ENCODE measurements at regions of chr17 and their contacts with region 1.

Region 1: DNA sequence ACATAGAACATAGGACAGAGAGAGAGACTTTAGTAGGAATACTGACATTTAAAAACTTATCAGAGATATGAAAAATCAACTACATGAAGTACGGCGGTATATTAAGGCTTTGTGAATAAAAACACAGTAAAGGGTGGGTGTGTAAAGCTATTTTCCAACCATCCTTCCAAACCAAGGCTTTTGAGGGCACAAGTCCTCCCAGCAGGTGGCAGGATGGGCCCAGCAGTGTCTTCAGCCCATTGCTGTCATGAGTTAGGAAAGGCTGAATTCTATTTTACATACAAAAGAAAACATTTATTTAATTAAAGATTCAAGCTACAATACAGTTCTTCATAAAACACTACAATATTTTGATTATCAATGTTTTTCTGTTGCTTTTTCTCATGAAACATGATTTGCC is 841.4 kb downstream of the KCNJ18 start:
- DNase-seq: no peak
- ATAC-seq: no peak
- H3K4me3 ChIP-seq: no peak overlapping the region
- H3K27ac ChIP-seq: no peak overlapping the region
- H3K4me1 ChIP-seq: no peaks in the 10 kb centered on the region
- CTCF ChIP-seq: no peak
- EP300 ChIP-seq: no peak
- POLR2A ChIP-seq: no peak
- RAD21 ChIP-seq: peak in 1 of 2 experiments; percentile 29; a peak in 2 of 5 replicates

Region 2: DNA sequence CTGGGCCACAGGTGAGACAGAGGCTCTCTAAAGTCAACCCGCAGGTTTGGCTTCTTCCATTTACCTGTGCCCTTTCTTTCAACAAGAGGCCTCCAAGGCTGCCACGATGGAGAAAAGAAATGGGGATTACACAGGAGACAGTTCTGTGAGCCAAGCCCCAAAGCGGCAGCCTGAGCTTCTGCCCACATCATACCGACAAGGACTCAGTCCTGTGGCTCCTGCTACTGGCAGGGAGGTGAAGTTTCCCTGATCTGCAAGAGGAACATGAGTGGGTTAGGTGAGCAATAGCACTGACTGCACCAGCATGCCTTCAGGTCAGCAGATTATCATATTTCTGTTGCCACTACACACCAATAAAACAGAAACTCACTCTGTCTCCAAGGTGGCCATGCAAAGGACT is 41.4 kb before region 1 on chr17:
- CTCF ChIA-PET with region 1: no interaction called
- POLR2A ChIA-PET with region 1: interaction called, 10 read pairs
- DNase-seq: no peak
- ATAC-seq: no peak
- H3K4me3 ChIP-seq: no peak overlapping the region
- H3K27ac ChIP-seq: no peak overlapping the region
- H3K4me1 ChIP-seq: no peaks in the 10 kb centered on the region
- CTCF ChIP-seq: no peak
- EP300 ChIP-seq: no peak
- POLR2A ChIP-seq: no peak
- RAD21 ChIP-seq: no peak